Right ventricle myocardium inferior (tissue), 1 donor: ENCODE measurements at regions of chr14 and their contacts with region 1.

Region 1: DNA sequence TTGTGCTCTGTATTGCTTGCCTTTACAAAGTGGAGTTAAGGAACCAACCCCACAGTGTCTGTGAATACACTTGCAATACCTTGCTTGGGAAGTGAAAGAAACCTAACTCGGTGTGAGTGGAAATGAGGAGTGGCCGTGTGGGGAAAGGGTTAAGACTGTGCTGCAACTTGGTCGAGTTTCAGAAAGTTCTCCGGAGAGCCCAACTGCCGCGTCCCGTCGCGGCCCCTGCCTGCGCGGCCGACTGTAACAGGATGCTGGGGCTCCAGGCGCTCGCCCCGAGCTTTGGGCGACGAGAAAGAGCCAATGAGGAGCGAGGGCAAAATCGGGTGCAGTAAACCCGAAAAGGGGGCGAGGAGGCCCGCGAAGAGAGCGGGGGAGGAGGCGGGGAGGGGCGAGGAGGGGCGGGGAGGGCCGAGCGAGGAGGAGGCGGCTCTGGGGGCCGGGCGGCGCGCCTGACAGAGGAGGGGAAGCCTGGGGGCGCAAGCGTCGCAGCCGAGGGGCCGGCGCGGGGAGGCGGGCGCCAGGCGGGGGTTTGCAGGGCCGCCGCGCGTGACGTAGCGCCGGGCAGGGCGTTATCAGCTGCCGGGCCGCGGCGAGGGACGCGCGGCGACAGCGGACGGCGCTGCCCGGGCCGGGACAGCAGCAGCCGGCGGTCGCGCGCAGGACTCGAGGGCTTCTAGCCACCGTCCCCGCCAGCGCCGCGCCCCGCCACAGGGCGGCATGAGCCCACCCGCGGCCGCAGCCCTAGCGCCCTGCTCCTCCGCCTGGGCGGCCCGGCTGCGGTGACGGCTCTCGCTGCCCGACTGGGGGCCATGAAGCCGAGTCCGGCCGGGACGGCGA is at the start of gene DACT1:
- DNase-seq: peak; percentile 83
- ATAC-seq: peak; percentile 83
- total RNA-seq, gene DACT1: 2.8 TPM

Region 2: DNA sequence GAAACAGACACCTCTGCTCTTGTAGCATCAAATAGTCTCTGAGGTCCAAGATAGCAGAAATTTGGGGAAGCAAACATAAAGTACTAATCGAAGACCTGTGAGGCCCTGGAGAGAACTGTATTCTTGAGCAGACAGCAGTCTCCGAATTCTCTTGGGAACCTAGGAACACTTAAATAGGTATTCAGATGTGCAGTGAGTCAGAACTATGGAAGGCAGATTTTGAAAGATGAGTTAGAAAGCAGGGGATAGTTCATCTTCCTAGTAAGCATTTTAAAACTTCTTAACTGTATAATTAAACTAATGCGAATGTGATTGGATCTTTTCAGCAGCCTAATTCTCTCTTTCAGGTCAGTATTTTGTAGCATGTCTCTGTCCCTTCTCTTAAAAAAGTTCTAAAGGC is 1216.6 kb before region 1 on chr14:
- intact Hi-C with region 1: no loop called
- DNase-seq: no peak
- ATAC-seq: no peak

Region 3: DNA sequence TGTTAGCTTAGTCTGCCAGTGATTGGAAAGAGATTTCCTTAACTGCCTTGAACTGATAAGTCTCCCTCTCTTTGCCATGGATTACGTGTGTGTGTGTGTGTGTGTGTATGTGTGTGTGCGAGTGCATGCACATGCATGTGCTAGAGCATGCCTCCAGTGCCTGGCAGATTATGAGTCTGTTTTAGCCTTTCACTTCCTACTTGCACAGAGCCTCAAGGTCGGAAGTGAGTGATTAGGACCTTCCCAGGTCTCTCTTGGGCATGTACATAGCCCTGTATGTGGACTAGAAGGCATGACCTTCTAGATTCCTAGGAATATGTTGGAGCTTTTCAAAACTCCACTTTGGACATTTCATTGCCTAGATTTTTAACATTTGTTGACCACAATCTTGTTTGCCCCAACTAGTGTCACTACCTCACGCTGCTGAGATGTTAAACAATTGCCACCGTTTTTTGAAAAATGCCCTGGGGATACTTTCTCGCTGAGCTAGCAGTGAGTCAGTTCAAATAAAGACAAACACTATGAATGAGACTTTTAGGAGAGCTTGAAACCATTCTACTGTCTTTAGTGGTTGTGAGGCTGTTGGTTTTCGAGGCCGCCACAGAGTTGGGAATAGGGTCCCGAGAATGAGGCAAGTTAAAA is 181.9 kb before region 1 on chr14:
- intact Hi-C with region 1: no loop called
- DNase-seq: no peak
- ATAC-seq: no peak

Region 4: GRCh38 chr14:58501214-58501816 is 136.3 kb before region 1 on chr14:
- intact Hi-C with region 1: loop called (anchors 5 kb)
- DNase-seq: no peak
- ATAC-seq: peak; percentile 68

Region 5: DNA sequence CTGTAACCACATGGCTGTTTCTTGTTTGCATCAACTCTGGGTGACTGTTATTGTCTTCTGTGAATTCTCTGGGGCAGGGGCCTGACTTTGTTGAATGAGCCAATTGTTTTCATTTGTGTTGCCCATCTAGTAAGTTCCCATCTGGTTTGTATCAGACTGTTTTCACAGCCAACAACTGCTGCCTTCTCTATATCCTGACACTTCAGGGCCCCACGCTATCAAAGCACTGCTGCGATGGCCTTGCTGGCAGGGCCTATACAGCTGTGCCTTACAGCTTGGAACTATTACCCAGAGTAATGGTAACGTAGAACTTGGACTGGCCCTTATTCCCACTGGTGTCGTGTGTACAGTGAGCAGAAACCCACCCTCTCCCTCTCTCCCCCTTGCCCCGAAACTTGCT is 104.2 kb before region 1 on chr14:
- intact Hi-C with region 1: loop called (anchors 10 kb)
- DNase-seq: no peak
- ATAC-seq: peak; percentile 74

Region 6: DNA sequence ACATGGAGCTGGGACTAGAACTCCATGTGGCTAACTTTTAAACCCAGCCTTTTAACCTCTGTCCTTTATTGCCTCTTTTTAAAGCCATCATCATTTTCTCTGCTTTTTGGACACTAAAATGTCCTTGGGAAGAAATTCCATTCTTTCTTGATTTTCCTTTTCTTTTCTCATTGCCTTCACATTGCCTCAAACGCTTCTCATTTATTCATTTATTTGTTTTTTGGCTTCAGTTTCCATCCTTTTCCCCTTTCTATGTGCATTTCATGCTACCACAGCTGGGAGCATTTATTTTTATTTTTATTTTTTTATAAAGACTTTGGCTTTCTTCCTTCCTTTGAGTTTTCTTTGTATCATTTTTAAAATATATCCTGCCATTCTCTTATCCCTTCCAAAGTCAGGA is 212.4 kb after region 1 on chr14:
- intact Hi-C with region 1: loop called (anchors 5 kb)
- DNase-seq: no peak
- ATAC-seq: no peak

Region 7: DNA sequence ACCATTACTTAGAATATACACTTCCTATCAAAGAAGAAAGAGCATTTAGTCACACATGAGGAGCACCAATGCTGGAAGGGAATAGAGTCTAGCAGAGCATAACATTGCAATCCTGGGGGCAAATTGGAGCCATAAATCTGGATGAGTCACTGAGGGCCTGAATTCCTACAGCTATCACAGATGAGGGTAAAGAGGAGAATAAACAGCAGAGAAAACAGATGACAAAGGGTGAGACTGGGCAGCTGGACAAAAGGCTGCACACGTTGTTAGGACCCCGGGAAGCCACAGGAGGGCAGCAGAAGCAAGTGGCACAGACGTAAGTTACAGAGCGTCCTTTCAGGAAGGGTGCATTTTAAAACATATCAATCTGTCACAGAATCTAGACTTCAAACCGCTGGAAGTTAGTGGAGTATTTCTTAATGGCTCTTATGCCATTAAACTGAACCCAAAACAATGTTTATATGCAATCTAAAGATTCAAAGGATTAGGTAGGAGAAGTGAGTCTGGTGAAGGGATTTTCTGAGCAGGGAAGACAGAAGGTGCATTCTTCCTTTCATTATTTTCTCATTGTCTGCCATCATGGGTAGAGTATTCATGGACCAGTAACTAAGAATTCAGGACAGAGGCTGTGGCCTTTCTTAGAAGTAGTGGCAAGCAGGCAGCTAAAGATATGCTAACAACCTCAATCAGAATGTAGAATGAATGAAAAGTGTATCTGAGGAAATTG is 391.0 kb after region 1 on chr14:
- intact Hi-C with region 1: loop called (anchors 10 kb)
- DNase-seq: no peak
- ATAC-seq: peak; percentile 80

Region 8: DNA sequence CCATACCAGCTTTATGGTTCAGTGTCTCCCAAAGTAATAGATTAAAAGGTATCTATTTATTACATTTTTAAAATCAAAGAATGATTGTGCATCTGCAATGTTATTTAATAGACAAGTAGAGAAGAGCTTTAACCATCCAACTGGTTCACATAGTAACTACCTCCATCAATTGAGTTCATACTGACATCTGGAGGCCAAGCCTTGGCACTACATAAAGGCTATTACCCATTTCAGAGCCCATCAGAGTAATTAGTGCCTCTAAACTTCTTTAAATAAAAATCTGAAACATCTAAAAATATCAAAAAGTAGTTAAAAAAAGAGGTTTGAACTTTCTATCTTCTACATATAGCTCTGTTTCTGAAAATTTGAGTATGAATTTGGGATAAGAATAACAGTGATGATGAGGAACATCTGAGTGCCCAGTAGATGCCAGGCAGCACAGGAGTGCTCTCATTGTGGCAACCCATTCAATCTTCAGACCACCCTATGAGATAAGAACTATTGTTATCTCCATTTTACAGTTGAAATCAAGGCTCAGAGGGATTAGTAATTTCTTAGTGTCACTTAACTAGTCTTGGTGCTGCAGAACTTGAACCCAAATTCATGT is 417.9 kb after region 1 on chr14:
- intact Hi-C with region 1: loop called (anchors 5 kb)
- DNase-seq: no peak
- ATAC-seq: peak; percentile 63